ENCODE measurements at regions of chr3 and their contacts with region 1.

Region 1: DNA sequence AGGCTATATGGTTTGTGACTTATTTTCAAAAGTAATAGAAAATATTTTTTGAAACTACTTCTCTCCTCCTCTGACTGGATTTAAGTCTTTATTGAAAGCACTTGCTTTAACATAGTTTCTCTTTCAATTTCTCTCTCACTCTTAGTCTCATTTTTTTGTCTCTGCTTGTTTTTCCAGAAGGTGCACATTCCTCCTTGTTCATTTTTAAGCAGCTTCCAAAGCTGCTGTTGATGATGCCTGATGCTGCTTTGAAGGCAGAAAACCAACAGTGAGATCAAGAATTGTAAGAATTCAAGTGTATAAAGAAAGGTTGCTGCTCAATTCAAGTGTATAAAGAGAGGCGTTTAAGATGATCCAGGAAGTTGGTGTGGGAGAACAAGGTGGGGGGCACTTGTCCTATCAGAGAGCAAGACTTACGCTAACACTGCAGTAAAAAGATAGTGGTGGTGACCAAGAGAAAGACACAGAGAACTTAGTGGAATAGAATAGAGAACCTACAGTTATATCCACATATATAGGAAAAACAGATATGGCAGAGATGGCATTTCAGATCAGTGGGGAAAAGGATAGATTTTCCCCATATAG is 12.1 kb downstream of the NR2C2 start:
- DNase-seq: no peak
- H3K4me3 ChIP-seq: peak overlapping the region in 1 of 4 donors; percentile 3
- H3K27ac ChIP-seq: peak overlapping the region in 1 of 4 donors; percentile 3
- H3K4me1 ChIP-seq: peaks cover 14 to 45% (median 36%) of the 10 kb centered on the region in 4 donors
- H3K27me3 ChIP-seq: no peaks in the 10 kb centered on the region
- CTCF ChIP-seq: no peak
- EP300 ChIP-seq: no peak
- POLR2A ChIP-seq: no peak

Region 2: DNA sequence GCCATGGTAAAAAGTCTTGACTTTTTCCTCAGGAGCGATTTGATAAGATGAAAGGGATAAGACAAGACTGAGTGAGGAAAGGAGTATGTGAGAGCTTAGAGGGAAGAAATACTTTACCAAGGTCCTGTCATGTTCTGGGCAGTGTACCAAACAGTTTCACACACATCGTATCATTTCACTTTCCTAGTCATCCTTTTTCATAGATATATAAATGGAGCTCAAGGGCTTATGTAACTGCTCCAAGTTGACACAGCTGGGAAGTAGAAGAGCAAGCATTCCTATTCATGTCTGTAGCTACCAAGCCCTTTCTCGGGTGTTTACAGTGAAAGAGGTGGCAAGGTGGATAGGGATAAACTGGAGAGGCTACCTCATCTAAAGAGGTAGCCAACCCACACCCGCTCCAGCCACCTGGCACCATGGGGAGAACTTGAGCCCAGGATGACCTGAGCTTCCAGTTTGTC is 48.3 kb after region 1 on chr3:
- intact Hi-C with region 1: loop called (anchors 10 kb)
- DNase-seq: no peak
- H3K4me3 ChIP-seq: no peak overlapping the region
- H3K27ac ChIP-seq: peak overlapping the region in 3 of 4 donors; percentile 49 to 72 (median 60)
- H3K4me1 ChIP-seq: peaks cover 4 to 20% (median 16%) of the 10 kb centered on the region in 4 donors
- H3K27me3 ChIP-seq: no peaks in the 10 kb centered on the region
- CTCF ChIP-seq: no peak
- EP300 ChIP-seq: no peak
- POLR2A ChIP-seq: no peak

Measured in esophagus muscularis mucosa (tissue), 4 donors.